ENCODE measurements at regions of chr11 and their contacts with region 1.

Region 1: GRCh38 chr11:57335343-57336110 is at the start of gene SSRP1:
- DNase-seq: peak; percentile 91 to 94 (median 94)
- ATAC-seq: peak; percentile 97
- H3K4me3 ChIP-seq: peak within 1 kb of the TSS; percentile 92
- H3K27ac ChIP-seq: peak within 1 kb of the TSS; percentile 86
- H3K4me1 ChIP-seq: peaks cover 10 to 21% of the 10 kb centered on the region in 2 experiments; a peak in 4 of 5 replicates
- H3K27me3 ChIP-seq: no peaks in the 10 kb centered on the region; a peak in 1 of 5 replicates
- CTCF ChIP-seq: peak in 2 of 3 experiments; percentile 8 to 25; a peak in 1 of 6 replicates
- EP300 ChIP-seq: peak; percentile 16; the same call in 1 of the 2 replicates
- POLR2A ChIP-seq: peak; percentile 69
- RAD21 ChIP-seq: no peak
- polyA plus RNA-seq, gene SSRP1: 91.1 to 96.0 TPM

Region 2: DNA sequence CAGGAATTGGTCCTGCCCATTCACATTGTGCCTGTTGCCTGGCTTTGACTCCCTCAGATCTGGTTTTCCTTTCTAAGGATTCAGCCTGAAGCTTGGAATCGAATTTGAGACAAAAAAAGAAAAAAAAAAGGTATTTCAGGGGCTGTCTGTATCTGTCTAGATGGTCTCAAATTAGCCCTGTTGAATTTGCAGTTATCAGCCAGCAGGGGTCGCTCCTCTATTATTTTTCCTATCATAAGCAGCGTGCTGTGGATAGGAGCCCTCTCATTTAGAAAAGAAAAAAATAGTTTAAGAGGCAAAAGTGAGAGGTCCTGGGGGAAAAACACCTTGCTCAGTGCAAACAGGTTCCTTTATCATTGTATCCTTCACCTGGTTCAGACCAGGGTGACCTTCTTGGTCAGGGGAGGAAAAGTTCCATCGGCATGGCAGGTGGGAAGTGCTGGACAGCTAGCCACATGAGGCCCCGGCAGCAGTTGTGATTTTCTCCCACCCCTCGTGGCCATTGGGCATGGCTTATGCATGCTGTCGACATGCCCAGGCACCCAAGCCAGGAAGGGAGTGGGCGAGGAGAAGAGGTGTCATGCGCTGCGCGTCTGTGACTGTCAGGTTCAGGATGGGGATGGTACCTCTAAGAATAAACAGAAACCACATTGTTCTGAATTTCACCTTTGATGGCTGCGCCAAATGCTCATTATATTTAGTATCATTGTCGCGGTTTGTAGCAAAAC is 333.7 kb before region 1 on chr11:
- CTCF ChIA-PET with region 1: interaction called, 3 read pairs
- POLR2A ChIA-PET with region 1: no interaction called
- in situ Hi-C with region 1: no loop called
- intact Hi-C with region 1: loop called (anchors 1 kb)
- DNase-seq: peak; percentile 28 to 41 (median 32)
- ATAC-seq: peak; percentile 88
- H3K4me3 ChIP-seq: no peak overlapping the region
- H3K27ac ChIP-seq: no peak overlapping the region
- H3K4me1 ChIP-seq: no peaks in the 10 kb centered on the region
- H3K27me3 ChIP-seq: no peaks in the 10 kb centered on the region
- CTCF ChIP-seq: peak; percentile 45 to 61 (median 55); a peak in 5 of 6 replicates
- EP300 ChIP-seq: no peak
- POLR2A ChIP-seq: no peak
- RAD21 ChIP-seq: peak in 1 of 2 experiments; percentile 39; a peak in 2 of 4 replicates

Region 3: DNA sequence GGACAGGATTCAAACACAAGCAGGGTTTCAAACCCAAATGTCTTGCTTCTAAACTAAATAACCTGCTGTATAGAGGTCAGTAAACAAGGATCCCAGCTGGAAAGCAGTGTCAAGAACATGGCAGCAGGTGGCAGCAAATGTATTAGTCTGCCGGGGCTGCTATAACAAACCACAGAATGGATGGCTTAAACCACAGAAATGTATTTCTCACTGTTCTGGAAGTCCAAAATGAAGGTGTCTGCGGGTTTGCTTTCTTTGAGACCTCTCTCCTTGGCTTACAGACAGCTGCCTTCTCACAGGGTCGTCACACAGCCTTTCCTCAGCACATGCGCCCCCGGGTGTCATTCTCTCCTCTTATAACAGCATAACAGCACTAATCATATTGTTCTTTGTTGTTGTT is 218.9 kb before region 1 on chr11:
- CTCF ChIA-PET with region 1: no interaction called
- POLR2A ChIA-PET with region 1: no interaction called
- in situ Hi-C with region 1: no loop called
- intact Hi-C with region 1: loop called (anchors 5 kb)
- DNase-seq: peak; percentile 42 to 78 (median 58)
- ATAC-seq: peak; percentile 95
- H3K4me3 ChIP-seq: no peak overlapping the region
- H3K27ac ChIP-seq: no peak overlapping the region
- H3K4me1 ChIP-seq: peaks cover 0 to 3% of the 10 kb centered on the region in 2 experiments; a peak in 2 of 5 replicates
- H3K27me3 ChIP-seq: no peaks in the 10 kb centered on the region
- CTCF ChIP-seq: peak; percentile 80 to 85 (median 80)
- EP300 ChIP-seq: no peak
- POLR2A ChIP-seq: no peak
- RAD21 ChIP-seq: peak; percentile 87 to 93

Region 4: GRCh38 chr11:57131080-57131790 is 204.3 kb before region 1 on chr11:
- CTCF ChIA-PET with region 1: no interaction called
- POLR2A ChIA-PET with region 1: no interaction called
- in situ Hi-C with region 1: no loop called
- intact Hi-C with region 1: loop called (anchors 5 kb)
- DNase-seq: peak; percentile 24 to 68 (median 32)
- ATAC-seq: peak; percentile 81
- H3K4me3 ChIP-seq: no peak overlapping the region
- H3K27ac ChIP-seq: no peak overlapping the region
- H3K4me1 ChIP-seq: peaks cover 0 to 16% of the 10 kb centered on the region in 2 experiments; a peak in 3 of 5 replicates
- H3K27me3 ChIP-seq: no peaks in the 10 kb centered on the region
- CTCF ChIP-seq: peak; percentile 80 to 87 (median 87)
- EP300 ChIP-seq: no peak
- POLR2A ChIP-seq: no peak
- RAD21 ChIP-seq: peak; percentile 92

Region 5: GRCh38 chr11:57324886-57325734 is 10.4 kb before region 1 on chr11 and contains the start of gene TNKS1BP1:
- CTCF ChIA-PET with region 1: interaction called, 3 read pairs
- POLR2A ChIA-PET with region 1: interaction called, 28 read pairs
- in situ Hi-C with region 1: no loop called
- intact Hi-C with region 1: no loop called
- DNase-seq: peak; percentile 87 to 96 (median 92)
- ATAC-seq: peak; percentile 91
- H3K4me3 ChIP-seq: peak within 1 kb of the TSS; percentile 60
- H3K27ac ChIP-seq: peak within 1 kb of the TSS; percentile 88
- H3K4me1 ChIP-seq: peaks cover 47 to 54% of the 10 kb centered on the region in 2 experiments
- H3K27me3 ChIP-seq: no peaks in the 10 kb centered on the region
- CTCF ChIP-seq: no peak
- EP300 ChIP-seq: no peak
- POLR2A ChIP-seq: peak; percentile 87
- RAD21 ChIP-seq: no peak
- polyA plus RNA-seq, gene TNKS1BP1: 1.1 to 1.2 TPM

Region 6: DNA sequence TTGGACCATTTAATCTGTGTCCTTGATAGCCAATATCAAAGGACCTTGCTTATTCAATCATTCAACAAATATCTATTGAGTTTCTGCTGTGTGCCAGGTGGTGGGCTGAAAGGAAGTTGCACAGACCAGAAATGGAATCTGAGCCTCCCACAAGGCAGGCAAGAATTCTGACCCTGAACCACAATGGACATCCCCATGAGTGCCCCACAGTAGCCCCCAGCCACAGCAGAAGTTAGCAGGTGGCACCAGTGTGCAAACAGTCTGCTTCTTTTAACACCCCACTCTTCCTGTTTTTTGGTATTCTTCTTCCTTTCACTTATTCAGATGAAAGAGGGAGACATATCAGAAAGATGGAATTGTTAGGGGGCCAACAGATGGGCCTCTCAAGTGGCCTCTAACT is 249.8 kb after region 1 on chr11:
- CTCF ChIA-PET with region 1: no interaction called
- POLR2A ChIA-PET with region 1: no interaction called
- in situ Hi-C with region 1: no loop called
- intact Hi-C with region 1: no loop called
- DNase-seq: no peak
- ATAC-seq: no peak
- H3K4me3 ChIP-seq: no peak overlapping the region
- H3K27ac ChIP-seq: no peak overlapping the region
- H3K4me1 ChIP-seq: no peaks in the 10 kb centered on the region
- H3K27me3 ChIP-seq: peaks cover 0 to 11% of the 10 kb centered on the region in 2 experiments; a peak in 3 of 5 replicates
- CTCF ChIP-seq: no peak
- EP300 ChIP-seq: no peak
- POLR2A ChIP-seq: no peak
- RAD21 ChIP-seq: no peak

Region 7: GRCh38 chr11:57644748-57645688 is 309.5 kb after region 1 on chr11:
- CTCF ChIA-PET with region 1: no interaction called
- POLR2A ChIA-PET with region 1: interaction called, 3 read pairs
- in situ Hi-C with region 1: loop called (anchors 5 kb)
- intact Hi-C with region 1: no loop called
- DNase-seq: peak; percentile 83 to 87 (median 86)
- ATAC-seq: peak; percentile 84
- H3K4me3 ChIP-seq: no peak overlapping the region
- H3K27ac ChIP-seq: no peak overlapping the region
- H3K4me1 ChIP-seq: peaks cover 31 to 34% of the 10 kb centered on the region in 2 experiments
- H3K27me3 ChIP-seq: peaks cover 0 to 15% of the 10 kb centered on the region in 2 experiments; a peak in 2 of 5 replicates
- CTCF ChIP-seq: peak; percentile 80 to 85 (median 82)
- EP300 ChIP-seq: no peak
- POLR2A ChIP-seq: no peak
- RAD21 ChIP-seq: peak; percentile 62 to 70

Measured in K562 (cell line).